Activated CD4-positive, alpha-beta T cell treated with anti-CD3 and anti-CD28 coated beads, Interleukin-2, amount 10 ng/mL, durations not matched to agents 24 days and 14 days (primary cell): ENCODE measurements at regions of chr3 and their contacts with region 1.

Region 1: DNA sequence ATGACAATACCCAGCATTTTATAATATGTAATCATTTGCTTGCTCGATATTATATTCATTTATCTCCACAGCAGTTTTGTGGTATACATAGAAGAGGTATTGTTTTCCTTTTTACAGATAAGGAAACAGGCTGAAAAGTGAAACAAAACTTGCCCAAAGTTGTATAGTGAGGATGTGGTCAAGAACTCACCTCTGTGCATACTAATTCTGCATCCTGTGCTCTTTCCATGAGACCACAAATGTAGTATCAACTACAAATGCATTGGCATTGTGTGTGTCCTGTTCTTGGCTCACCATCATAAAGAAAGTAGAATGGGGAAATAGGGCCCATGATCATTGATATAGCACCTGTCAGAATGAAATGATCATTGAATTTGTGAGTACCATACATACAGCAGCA is 167.3 kb downstream of the NECTIN3 start:
- DNase-seq: peak; percentile 85
- H3K4me3 Mint-ChIP-seq: peak overlapping the region; percentile 34
- H3K27ac Mint-ChIP-seq: peak overlapping the region; percentile 52
- H3K4me1 Mint-ChIP-seq: peaks cover 37% of the 10 kb centered on the region
- H3K27me3 Mint-ChIP-seq: no peaks in the 10 kb centered on the region

Region 2: GRCh38 chr3:110814170-110815007 is 424.5 kb before region 1 on chr3:
- intact Hi-C with region 1: loop called (anchors 10 kb)
- DNase-seq: peak; percentile 71
- H3K4me3 Mint-ChIP-seq: peak overlapping the region; percentile 17
- H3K27ac Mint-ChIP-seq: peak overlapping the region; percentile 56
- H3K4me1 Mint-ChIP-seq: peaks cover 10% of the 10 kb centered on the region
- H3K27me3 Mint-ChIP-seq: peaks cover 19% of the 10 kb centered on the region

Region 3: GRCh38 chr3:111260878-111261277 is 22.0 kb after region 1 on chr3:
- intact Hi-C with region 1: loop called (anchors 1 kb)
- DNase-seq: no peak
- H3K4me3 Mint-ChIP-seq: no peak overlapping the region
- H3K27ac Mint-ChIP-seq: peak overlapping the region; percentile 31
- H3K4me1 Mint-ChIP-seq: peaks cover 19% of the 10 kb centered on the region
- H3K27me3 Mint-ChIP-seq: peaks cover 23% of the 10 kb centered on the region

Region 4: GRCh38 chr3:111326144-111326995 is 87.5 kb after region 1 on chr3:
- intact Hi-C with region 1: loop called (anchors 2 kb)
- DNase-seq: no peak
- H3K4me3 Mint-ChIP-seq: peak overlapping the region; percentile 3
- H3K27ac Mint-ChIP-seq: peak overlapping the region; percentile 67
- H3K4me1 Mint-ChIP-seq: peaks cover 29% of the 10 kb centered on the region
- H3K27me3 Mint-ChIP-seq: no peaks in the 10 kb centered on the region

Region 5: DNA sequence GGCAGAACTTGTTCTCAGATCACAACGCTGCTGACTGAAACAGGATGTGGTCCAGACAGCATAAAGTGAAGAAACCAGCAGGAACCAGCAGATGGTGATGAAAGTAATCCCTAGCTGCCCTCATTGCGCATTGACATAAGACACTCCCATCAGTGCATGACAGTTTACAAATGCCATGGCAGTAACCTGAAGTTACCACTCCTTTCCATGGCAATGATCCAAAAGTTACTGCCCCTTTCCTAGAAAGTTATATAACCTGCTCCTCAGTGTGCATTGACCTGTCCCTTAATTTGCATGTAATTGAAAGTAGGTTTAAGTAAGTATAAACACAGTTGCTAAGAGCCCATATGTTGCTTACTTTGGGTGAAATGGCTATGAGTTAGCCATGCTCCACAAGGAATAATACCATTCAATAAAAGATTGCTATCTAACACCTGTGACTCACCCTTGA is 154.0 kb after region 1 on chr3:
- intact Hi-C with region 1: no loop called
- DNase-seq: peak; percentile 81
- H3K4me3 Mint-ChIP-seq: peak overlapping the region; percentile 11
- H3K27ac Mint-ChIP-seq: no peak overlapping the region
- H3K4me1 Mint-ChIP-seq: peaks cover 8% of the 10 kb centered on the region
- H3K27me3 Mint-ChIP-seq: no peaks in the 10 kb centered on the region

Region 6: GRCh38 chr3:111594205-111594604 is 355.3 kb after region 1 on chr3:
- intact Hi-C with region 1: loop called (anchors 5 kb)
- DNase-seq: peak; percentile 67
- H3K4me3 Mint-ChIP-seq: peak overlapping the region; percentile 96
- H3K27ac Mint-ChIP-seq: peak overlapping the region; percentile 96
- H3K4me1 Mint-ChIP-seq: peaks cover 57% of the 10 kb centered on the region
- H3K27me3 Mint-ChIP-seq: no peaks in the 10 kb centered on the region